AG04450 (cell line): ENCODE measurements at regions of chr5 and their contacts with region 1.

Region 1: DNA sequence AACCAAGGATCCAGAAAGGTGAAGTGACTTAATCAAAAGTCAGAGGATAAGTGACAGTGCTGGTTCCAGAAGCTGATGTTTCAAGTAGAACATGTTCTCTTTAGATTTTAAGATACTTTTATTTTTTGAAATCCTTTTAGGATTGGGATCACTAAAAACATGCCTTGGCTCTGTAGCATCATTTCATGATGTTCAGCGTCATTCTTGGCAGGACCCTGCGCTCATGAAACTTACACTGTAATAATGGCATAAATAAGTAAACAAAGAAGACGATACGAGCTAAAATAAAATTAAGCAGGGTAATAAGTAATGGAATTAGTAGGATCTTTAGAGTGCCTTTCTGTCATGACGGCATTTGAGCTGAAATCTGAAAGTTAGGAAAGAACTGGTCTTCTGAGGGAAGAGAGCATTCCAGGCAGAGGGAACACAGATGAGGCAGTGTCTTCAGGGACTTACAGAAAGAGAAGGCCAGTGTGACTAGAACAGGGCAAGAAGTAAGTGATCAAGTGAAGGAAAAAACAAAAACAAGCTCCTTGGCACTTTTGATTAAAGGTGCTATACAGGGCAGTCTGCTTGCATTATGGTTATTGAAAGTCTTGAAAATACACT is 19.9 kb downstream of the CTNNA1 start:
- DNase-seq: no peak
- H3K4me3 ChIP-seq: no peak overlapping the region
- H3K27ac ChIP-seq: no peak overlapping the region
- H3K27me3 ChIP-seq: no peaks in the 10 kb centered on the region
- CTCF ChIP-seq: no peak

Region 2: DNA sequence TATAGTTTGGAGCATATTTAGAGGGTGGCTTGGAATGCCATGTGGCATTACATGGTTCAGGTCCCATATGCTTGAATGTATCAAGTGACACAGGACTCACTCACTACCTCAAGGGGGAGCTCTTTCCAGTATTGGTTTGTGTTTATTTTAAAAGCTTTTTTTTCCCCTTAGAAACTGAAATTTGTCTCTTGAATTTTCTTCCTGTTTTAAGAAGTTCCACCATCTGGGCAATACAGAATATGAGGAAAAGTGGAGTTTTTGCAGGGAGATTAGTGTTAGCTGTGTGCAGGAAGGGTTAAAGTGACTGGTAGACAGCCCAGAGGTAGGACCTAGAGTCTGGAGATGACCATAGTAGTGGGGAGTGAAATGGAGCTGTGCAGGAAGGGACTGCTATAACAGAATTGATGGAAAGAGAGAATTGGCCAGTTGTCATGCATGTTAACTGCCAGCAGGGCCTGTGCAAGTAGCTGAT is 16.7 kb after region 1 on chr5:
- CTCF ChIA-PET with region 1: interaction called, 29 read pairs
- POLR2A ChIA-PET with region 1: no interaction called
- DNase-seq: no peak
- H3K4me3 ChIP-seq: no peak overlapping the region
- H3K27ac ChIP-seq: no peak overlapping the region
- H3K27me3 ChIP-seq: no peaks in the 10 kb centered on the region
- CTCF ChIP-seq: peak; percentile 55